WTC11 (cell line): ENCODE measurements at regions of chr6 and their contacts with region 1.

Region 1: GRCh38 chr6:121897337-121897760 is 461.9 kb downstream of the GJA1 start:
- DNase-seq: no peak
- ATAC-seq: peak; percentile 55
- H3K4me3 Mint-ChIP-seq: no peak overlapping the region
- H3K27ac Mint-ChIP-seq: peak overlapping the region; percentile 38
- H3K4me1 Mint-ChIP-seq: peaks cover 22% of the 10 kb centered on the region
- H3K27me3 Mint-ChIP-seq: no peaks in the 10 kb centered on the region
- CTCF ChIP-seq: no peak

Region 2: DNA sequence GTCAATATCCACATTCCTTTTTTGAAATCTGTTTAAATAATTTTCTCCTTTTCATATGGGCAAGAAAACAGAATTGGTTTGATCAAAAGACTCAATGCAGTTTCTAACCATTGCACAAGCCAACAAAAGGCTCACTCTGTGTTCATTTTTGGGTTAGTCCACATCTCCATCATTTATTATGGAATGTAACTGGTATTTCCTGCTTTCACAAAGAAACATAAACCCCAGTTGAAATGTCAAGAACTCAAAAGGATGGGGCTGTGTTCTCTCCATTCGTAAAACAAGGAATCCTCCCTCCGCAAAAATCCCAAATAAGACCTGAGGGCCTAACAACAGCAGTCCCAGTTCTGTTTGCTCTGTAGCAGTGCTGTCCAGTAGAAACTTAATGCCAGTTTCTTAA is 41.1 kb before region 1 on chr6:
- CTCF ChIA-PET with region 1: no interaction called
- POLR2A ChIA-PET with region 1: interaction called, 11 read pairs
- DNase-seq: no peak
- ATAC-seq: no peak
- H3K4me3 Mint-ChIP-seq: no peak overlapping the region
- H3K27ac Mint-ChIP-seq: no peak overlapping the region
- H3K4me1 Mint-ChIP-seq: peaks cover 37% of the 10 kb centered on the region
- H3K27me3 Mint-ChIP-seq: no peaks in the 10 kb centered on the region
- CTCF ChIP-seq: no peak